ENCODE measurements at regions of chr15 and their contacts with region 1.

Region 1: GRCh38 chr15:71278989-71279756 is 163.9 kb downstream of the THSD4 start:
- DNase-seq: peak; percentile 78 to 99
- ATAC-seq: peak; percentile 81 to 85
- H3K4me3 ChIP-seq: no peak overlapping the region
- H3K27ac ChIP-seq: peak overlapping the region; percentile 81 to 88
- H3K4me1 ChIP-seq: peaks cover 81% of the 10 kb centered on the region
- CTCF ChIP-seq: no peak
- EP300 ChIP-seq: peak; percentile 98 to 99
- POLR2A ChIP-seq: no peak
- RAD21 ChIP-seq: peak; percentile 22 to 76; a peak in 4 of 5 replicates

Region 2: DNA sequence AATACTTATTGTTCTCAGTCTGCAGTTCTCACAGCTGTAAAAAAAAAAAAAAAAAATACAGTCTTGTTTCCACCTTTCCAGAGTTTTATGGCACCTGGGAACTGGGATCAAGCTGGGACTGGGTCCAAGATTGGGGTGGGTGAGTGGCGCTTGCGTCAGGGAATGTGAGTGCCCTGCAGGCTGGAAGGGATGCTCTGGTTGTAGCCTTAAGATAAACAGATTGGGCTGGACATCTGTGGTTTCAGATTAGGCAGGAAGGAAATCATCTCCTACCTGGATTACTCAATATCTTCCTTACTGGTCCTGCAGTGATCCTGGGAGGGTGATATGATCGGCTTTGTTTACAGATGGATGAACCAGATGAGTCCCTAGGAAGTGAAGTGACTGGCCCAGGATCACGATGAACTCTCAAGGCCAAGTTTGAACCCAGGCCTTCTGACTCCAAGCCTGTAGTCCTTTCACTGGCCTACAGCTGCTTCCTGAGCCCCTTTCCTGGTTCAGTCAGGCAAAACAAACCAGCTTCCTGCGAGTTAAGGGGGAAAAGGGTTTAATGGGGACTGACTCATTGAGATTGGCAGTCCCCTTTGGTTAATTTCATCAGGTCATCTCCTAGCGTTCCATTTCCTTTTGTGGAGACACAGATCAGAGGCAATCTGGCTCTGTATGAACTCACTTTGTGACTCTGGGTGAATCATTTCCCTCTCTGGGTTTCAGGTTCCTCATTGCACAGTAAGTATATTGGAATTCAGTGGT is 15.9 kb after region 1 on chr15:
- CTCF ChIA-PET with region 1: interaction called, 20 read pairs
- POLR2A ChIA-PET with region 1: interaction called, 22 read pairs
- DNase-seq: peak; percentile 97 to 99
- ATAC-seq: peak; percentile 90 to 92
- H3K4me3 ChIP-seq: no peak overlapping the region
- H3K27ac ChIP-seq: peak overlapping the region; percentile 96 to 97
- H3K4me1 ChIP-seq: peaks cover 74% of the 10 kb centered on the region
- CTCF ChIP-seq: no peak
- EP300 ChIP-seq: peak; percentile 83 to 87; a peak in 3 of 5 replicates
- POLR2A ChIP-seq: no peak
- RAD21 ChIP-seq: no peak; a peak in 3 of 5 replicates

Measured in A549 (cell line).